CD8-positive, alpha-beta memory T cell (primary cell): ENCODE measurements at regions of chr2 and their contacts with region 1.

Region 1: GRCh38 chr2:25851740-25852503 is 26.4 kb downstream of the ASXL2 start:
- DNase-seq: peak in 2 of 5 donors; percentile 63 to 69
- H3K4me3 ChIP-seq: no peak overlapping the region
- H3K4me3 Mint-ChIP-seq: peak overlapping the region; percentile 37 to 83 (median 72)
- H3K27ac ChIP-seq: peak overlapping the region; percentile 13
- H3K27ac Mint-ChIP-seq: peak overlapping the region; percentile 59 to 90 (median 84)
- H3K4me1 ChIP-seq: peaks cover 35% of the 10 kb centered on the region
- H3K4me1 Mint-ChIP-seq: peaks cover 45 to 56% (median 48%) of the 10 kb centered on the region in 3 donors
- H3K27me3 ChIP-seq: no peaks in the 10 kb centered on the region
- H3K27me3 Mint-ChIP-seq: no peaks in the 10 kb centered on the region

Region 2: GRCh38 chr2:25606892-25607291 is 245.0 kb before region 1 on chr2:
- CTCF ChIA-PET with region 1: interaction called, 18 read pairs
- POLR2A ChIA-PET with region 1: no interaction called
- DNase-seq: peak in 2 of 5 donors; percentile 11 to 24
- H3K4me3 ChIP-seq: no peak overlapping the region
- H3K4me3 Mint-ChIP-seq: no peak overlapping the region
- H3K27ac ChIP-seq: no peak overlapping the region
- H3K27ac Mint-ChIP-seq: no peak overlapping the region
- H3K4me1 ChIP-seq: no peaks in the 10 kb centered on the region
- H3K4me1 Mint-ChIP-seq: peaks cover 0 to 1% (median 0%) of the 10 kb centered on the region in 3 donors
- H3K27me3 ChIP-seq: no peaks in the 10 kb centered on the region
- H3K27me3 Mint-ChIP-seq: no peaks in the 10 kb centered on the region

Region 3: GRCh38 chr2:25831746-25832449 is 20.0 kb before region 1 on chr2:
- CTCF ChIA-PET with region 1: interaction called, 12 read pairs
- POLR2A ChIA-PET with region 1: no interaction called
- DNase-seq: peak in 1 of 5 donors; percentile 33
- H3K4me3 ChIP-seq: no peak overlapping the region
- H3K4me3 Mint-ChIP-seq: peak overlapping the region in 6 of 7 donors; percentile 2 to 67 (median 48)
- H3K27ac ChIP-seq: no peak overlapping the region
- H3K27ac Mint-ChIP-seq: peak overlapping the region; percentile 1 to 90 (median 71)
- H3K4me1 ChIP-seq: peaks cover 20% of the 10 kb centered on the region
- H3K4me1 Mint-ChIP-seq: peaks cover 45 to 63% (median 55%) of the 10 kb centered on the region in 3 donors
- H3K27me3 ChIP-seq: no peaks in the 10 kb centered on the region
- H3K27me3 Mint-ChIP-seq: no peaks in the 10 kb centered on the region

Region 4: GRCh38 chr2:25878361-25879132 is 26.6 kb after region 1 on chr2 and contains the start of gene ASXL2:
- CTCF ChIA-PET with region 1: interaction called, 11 read pairs
- POLR2A ChIA-PET with region 1: interaction called, 6 read pairs
- DNase-seq: peak; percentile 95 to 99 (median 97)
- H3K4me3 ChIP-seq: peak within 1 kb of the TSS; percentile 90
- H3K4me3 Mint-ChIP-seq: peak within 1 kb of the TSS; percentile 93 to 97 (median 96)
- H3K27ac ChIP-seq: peak within 1 kb of the TSS; percentile 96
- H3K27ac Mint-ChIP-seq: peak within 1 kb of the TSS; percentile 97 to 99 (median 98)
- H3K4me1 ChIP-seq: peaks cover 25% of the 10 kb centered on the region
- H3K4me1 Mint-ChIP-seq: peaks cover 30 to 43% (median 43%) of the 10 kb centered on the region in 3 donors
- H3K27me3 ChIP-seq: no peaks in the 10 kb centered on the region
- H3K27me3 Mint-ChIP-seq: no peaks in the 10 kb centered on the region
- total RNA-seq, gene ASXL2: 67.5 to 72.7 TPM

Region 5: GRCh38 chr2:25951071-25951547 is 99.2 kb after region 1 on chr2:
- CTCF ChIA-PET with region 1: interaction called, 25 read pairs
- POLR2A ChIA-PET with region 1: no interaction called
- DNase-seq: peak; percentile 48 to 78 (median 57)
- H3K4me3 ChIP-seq: no peak overlapping the region
- H3K4me3 Mint-ChIP-seq: no peak overlapping the region
- H3K27ac ChIP-seq: no peak overlapping the region
- H3K27ac Mint-ChIP-seq: no peak overlapping the region
- H3K4me1 ChIP-seq: no peaks in the 10 kb centered on the region
- H3K4me1 Mint-ChIP-seq: peaks cover 0 to 6% (median 3%) of the 10 kb centered on the region in 3 donors
- H3K27me3 ChIP-seq: no peaks in the 10 kb centered on the region
- H3K27me3 Mint-ChIP-seq: no peaks in the 10 kb centered on the region